CD4-positive, alpha-beta memory T cell (primary cell): ENCODE measurements at regions of chr3 and their contacts with region 1.

Region 1: GRCh38 chr3:160163229-160163878 is 61.9 kb upstream of the C3orf80 start:
- DNase-seq: peak in 3 of 5 donors; percentile 2 to 17 (median 14)
- H3K4me3 ChIP-seq: no peak overlapping the region
- H3K4me3 Mint-ChIP-seq: no peak overlapping the region
- H3K27ac ChIP-seq: no peak overlapping the region
- H3K27ac Mint-ChIP-seq: no peak overlapping the region
- H3K4me1 ChIP-seq: no peaks in the 10 kb centered on the region
- H3K4me1 Mint-ChIP-seq: peaks cover 0 to 2% (median 0%) of the 10 kb centered on the region in 4 donors
- H3K27me3 ChIP-seq: no peaks in the 10 kb centered on the region
- H3K27me3 Mint-ChIP-seq: peaks cover 3 to 8% of the 10 kb centered on the region in 2 donors

Region 2: DNA sequence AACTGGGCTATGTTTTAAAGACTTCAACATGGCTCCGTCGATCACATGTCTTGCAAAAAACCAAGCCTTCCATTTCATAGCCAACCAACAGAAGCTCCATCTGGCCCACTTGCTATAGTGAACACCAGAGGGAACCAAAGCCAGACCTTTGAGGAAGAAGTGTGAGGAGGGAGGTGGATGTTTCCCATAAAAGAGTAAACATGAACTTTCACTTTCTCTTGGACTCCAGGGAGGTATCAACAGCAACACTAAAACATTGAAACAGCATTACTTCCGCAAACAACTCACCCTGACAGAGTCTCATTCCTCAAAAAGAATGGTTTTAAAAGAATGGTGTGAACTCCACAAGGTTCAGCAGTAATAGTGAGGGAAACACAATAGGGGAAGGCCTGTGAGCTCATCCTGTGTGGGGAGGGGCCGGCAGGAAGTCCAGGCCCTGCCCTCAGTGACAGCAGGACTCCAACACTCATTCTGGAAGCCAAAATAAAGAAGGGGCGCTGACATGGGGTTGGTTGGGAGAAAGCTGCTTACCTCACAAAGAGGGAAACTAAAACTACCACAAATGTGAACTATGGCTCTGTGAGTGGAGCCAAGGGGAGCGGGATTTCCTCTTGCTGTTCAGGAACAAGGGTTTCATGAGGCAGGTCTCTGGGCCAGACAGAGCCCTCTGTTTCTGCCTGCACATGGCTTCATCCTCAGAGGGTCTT is 233.8 kb before region 1 on chr3:
- CTCF ChIA-PET with region 1: no interaction called
- POLR2A ChIA-PET with region 1: no interaction called
- intact Hi-C with region 1: no loop called
- DNase-seq: no peak
- H3K4me3 ChIP-seq: no peak overlapping the region
- H3K4me3 Mint-ChIP-seq: no peak overlapping the region
- H3K27ac ChIP-seq: no peak overlapping the region
- H3K27ac Mint-ChIP-seq: no peak overlapping the region
- H3K4me1 ChIP-seq: no peaks in the 10 kb centered on the region
- H3K4me1 Mint-ChIP-seq: peaks cover 0 to 4% (median 0%) of the 10 kb centered on the region in 4 donors
- H3K27me3 ChIP-seq: no peaks in the 10 kb centered on the region
- H3K27me3 Mint-ChIP-seq: peaks cover 1 to 4% of the 10 kb centered on the region in 2 donors

Region 3: DNA sequence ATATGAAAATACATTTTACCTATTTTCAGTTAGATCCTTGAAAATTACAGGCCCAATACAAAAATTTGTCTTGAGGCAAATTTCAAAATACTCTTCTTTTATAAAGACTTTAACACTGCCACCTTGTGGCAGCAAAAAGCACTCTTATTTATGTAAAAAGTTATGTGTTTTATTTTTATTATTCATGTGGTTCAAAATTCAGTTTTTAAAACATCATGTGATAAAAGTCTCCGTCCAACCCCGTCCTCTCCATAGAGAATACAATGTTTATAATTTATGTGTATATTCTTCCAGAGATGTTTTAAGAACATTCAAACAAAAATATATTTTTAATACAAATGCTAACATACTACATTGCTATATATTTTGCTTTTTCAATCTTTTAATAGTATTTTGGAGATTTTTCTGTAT is 323.1 kb after region 1 on chr3:
- CTCF ChIA-PET with region 1: interaction called, 11 read pairs
- POLR2A ChIA-PET with region 1: no interaction called
- intact Hi-C with region 1: loop called (anchors 2 kb)
- DNase-seq: peak in 4 of 5 donors; percentile 8 to 27 (median 20)
- H3K4me3 ChIP-seq: no peak overlapping the region
- H3K4me3 Mint-ChIP-seq: no peak overlapping the region
- H3K27ac ChIP-seq: no peak overlapping the region
- H3K27ac Mint-ChIP-seq: no peak overlapping the region
- H3K4me1 ChIP-seq: no peaks in the 10 kb centered on the region
- H3K4me1 Mint-ChIP-seq: peaks cover 0 to 7% (median 5%) of the 10 kb centered on the region in 4 donors
- H3K27me3 ChIP-seq: no peaks in the 10 kb centered on the region
- H3K27me3 Mint-ChIP-seq: peaks cover 2% of the 10 kb centered on the region in 2 donors